Mammary epithelial cell (primary cell): ENCODE measurements at regions of chr10 and their contacts with region 1.

Region 1: DNA sequence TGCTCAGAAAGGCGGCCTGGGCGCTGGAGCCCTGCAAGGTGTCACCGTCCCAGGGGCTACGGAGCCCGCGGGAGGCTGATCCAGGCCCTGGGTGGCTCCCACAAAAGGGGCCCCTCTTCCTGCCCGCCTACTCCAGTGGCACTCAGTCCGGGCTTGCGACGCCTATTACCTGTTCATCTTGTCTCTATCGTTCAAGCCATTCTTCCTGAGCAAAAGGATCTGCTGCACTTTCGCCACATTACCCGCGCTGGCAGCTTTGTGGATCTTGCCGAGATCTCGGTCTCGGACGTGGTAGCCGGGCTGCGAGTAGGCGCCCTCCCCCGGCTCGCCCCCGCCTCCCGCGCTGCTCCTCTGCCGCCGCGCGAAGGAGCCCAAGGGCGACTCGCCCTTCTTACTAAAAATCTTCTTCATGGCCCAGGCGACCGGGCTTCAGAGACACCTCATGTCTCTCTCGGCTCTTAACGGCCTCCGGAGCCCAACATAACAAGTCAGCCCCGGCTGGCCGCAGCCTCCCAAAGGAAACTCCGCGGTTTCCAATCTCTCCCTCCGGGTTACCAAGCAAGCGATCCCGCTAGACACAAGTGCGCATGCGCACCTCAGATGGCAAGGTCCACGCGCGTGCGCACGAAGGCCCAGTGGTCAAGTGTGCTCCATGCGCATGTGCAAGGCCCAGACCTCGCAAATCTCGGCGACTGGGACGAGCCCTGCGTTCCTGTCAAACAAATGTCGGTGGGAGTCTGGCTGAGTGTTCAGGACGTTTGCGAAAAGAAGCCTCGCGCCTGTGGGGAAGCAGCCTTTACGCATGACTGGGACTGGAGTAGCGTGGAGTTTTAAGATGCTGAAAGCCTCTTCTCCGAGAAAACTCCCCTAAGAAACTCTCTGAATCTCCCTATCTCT is at the start of gene ANKRD26:
- DNase-seq: peak; percentile 96
- H3K4me3 ChIP-seq: peak within 1 kb of the TSS; percentile 55 to 82 (median 80)
- H3K27ac ChIP-seq: peak within 1 kb of the TSS; percentile 64
- H3K4me1 ChIP-seq: peaks cover 5% of the 10 kb centered on the region
- H3K27me3 ChIP-seq: no peaks in the 10 kb centered on the region
- CTCF ChIP-seq: peak in 1 of 2 donors; percentile 14
- total RNA-seq, gene ANKRD26: 7.0 to 8.1 TPM

Region 2: GRCh38 chr10:26890956-26891355 is 209.2 kb before region 1 on chr10:
- CTCF ChIA-PET with region 1: no interaction called
- dilution Hi-C with region 1: no loop called
- in situ Hi-C with region 1: no loop called
- intact Hi-C with region 1: loop called (anchors 10 kb)
- DNase-seq: peak; percentile 57
- H3K4me3 ChIP-seq: no peak overlapping the region
- H3K27ac ChIP-seq: no peak overlapping the region
- H3K4me1 ChIP-seq: no peaks in the 10 kb centered on the region
- H3K27me3 ChIP-seq: no peaks in the 10 kb centered on the region
- CTCF ChIP-seq: peak; percentile 80 to 81